ENCODE measurements at regions of chr12 and their contacts with region 1.

Region 1: GRCh38 chr12:111505601-111506036 is 93.5 kb downstream of the ATXN2 start:
- DNase-seq: no peak
- H3K4me3 ChIP-seq: no peak overlapping the region
- H3K27ac ChIP-seq: no peak overlapping the region
- H3K4me1 ChIP-seq: no peaks in the 10 kb centered on the region
- H3K27me3 ChIP-seq: no peaks in the 10 kb centered on the region
- CTCF ChIP-seq: no peak

Region 2: GRCh38 chr12:111488271-111488670 is 17.3 kb before region 1 on chr12:
- CTCF ChIA-PET with region 1: no interaction called
- POLR2A ChIA-PET with region 1: interaction called, 11 read pairs
- intact Hi-C with region 1: no loop called
- DNase-seq: no peak
- H3K4me3 ChIP-seq: no peak overlapping the region
- H3K27ac ChIP-seq: no peak overlapping the region
- H3K4me1 ChIP-seq: no peaks in the 10 kb centered on the region
- H3K27me3 ChIP-seq: no peaks in the 10 kb centered on the region
- CTCF ChIP-seq: no peak

Region 3: DNA sequence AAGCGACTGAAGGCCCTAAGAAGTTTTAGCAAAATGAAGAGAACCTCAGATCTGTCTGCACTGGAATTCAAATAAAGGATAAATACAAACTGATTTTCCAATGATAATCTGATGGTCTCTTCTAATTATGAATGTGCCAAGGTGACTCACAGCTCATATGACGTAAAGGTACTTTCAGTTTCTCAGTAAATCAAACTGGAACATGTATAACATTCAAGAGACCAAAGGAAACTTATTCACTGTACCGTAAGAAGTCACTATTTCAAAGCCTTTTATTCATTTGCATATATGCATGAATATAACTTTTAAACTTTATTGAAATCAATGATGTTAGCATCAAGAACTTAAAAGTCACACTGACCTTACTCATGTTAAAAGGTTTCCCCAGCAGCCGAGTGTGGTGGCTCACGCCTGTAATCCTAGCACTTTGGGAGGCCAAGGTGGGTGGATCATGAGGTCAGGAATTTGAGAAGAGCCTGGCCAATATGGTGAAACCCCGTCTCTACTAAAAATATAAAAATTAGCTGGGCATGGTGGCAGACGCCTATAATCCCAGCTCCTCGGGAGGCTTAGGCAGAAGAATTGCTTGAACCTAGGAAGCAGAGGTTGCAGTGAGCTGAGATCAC is 41.3 kb after region 1 on chr12:
- CTCF ChIA-PET with region 1: no interaction called
- POLR2A ChIA-PET with region 1: interaction called, 37 read pairs
- intact Hi-C with region 1: no loop called
- DNase-seq: no peak
- H3K4me3 ChIP-seq: no peak overlapping the region
- H3K27ac ChIP-seq: no peak overlapping the region
- H3K4me1 ChIP-seq: no peaks in the 10 kb centered on the region
- H3K27me3 ChIP-seq: no peaks in the 10 kb centered on the region
- CTCF ChIP-seq: no peak

Region 4: DNA sequence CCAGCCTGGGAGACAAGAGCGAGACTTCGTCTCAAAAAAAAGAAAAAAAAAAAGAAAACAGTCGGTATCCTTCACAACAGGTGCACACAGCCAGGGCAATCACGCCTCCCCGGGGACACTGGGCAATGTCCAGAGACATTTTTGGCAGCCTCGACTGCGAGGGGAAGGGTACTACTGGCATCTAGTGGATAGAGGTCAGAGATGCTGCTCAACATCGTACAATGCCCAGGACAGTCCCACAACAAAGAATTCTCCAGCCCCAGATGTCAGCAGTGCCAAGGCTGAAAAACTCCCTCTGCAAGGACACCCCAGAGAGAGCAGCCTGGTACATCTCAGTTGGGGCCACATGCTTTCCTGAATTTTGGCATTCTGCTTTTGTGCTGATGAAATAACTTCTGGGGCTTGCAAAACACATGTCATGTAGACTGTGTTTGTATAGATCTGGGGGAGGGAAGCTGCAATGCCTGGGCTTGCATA is 282.6 kb after region 1 on chr12:
- CTCF ChIA-PET with region 1: no interaction called
- POLR2A ChIA-PET with region 1: no interaction called
- intact Hi-C with region 1: no loop called
- DNase-seq: no peak
- H3K4me3 ChIP-seq: no peak overlapping the region
- H3K27ac ChIP-seq: no peak overlapping the region
- H3K4me1 ChIP-seq: no peaks in the 10 kb centered on the region
- H3K27me3 ChIP-seq: no peaks in the 10 kb centered on the region
- CTCF ChIP-seq: peak; percentile 34; the same call in 1 of the 2 replicates

Measured in PC-9 (cell line).